CD4-positive, alpha-beta memory T cell (primary cell): ENCODE measurements at regions of chr17 and their contacts with region 1.

Region 1: DNA sequence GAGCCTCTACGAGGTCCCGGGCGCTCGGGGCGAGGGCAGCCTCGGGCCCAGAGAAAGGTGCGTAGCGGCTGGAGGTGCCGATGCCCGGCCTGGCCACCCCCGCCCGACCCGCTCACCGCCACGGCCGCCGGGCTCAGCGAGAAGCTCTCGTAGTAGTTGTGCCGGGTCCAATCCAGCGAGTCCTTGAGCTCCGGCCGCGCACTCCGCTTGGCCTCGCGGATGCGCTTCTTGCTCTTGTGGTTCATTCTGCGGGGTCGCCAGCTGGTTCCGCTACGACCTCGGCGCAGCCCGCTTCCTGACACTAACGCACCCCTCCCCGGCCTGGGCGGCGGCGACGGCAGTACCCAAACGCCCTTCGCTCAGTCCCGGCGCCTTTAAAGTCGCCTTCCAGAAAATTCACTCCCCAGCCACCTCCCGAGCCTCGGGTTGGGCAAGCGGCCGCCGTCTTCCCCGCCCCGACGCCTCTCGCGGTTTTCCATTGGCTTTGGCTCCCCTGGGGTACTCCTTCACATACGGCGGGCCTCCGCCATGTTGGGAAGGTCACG is at the start of gene JMJD6:
- DNase-seq: peak in 1 of 5 donors; percentile 98
- H3K4me3 ChIP-seq: peak within 1 kb of the TSS; percentile 52 to 95
- H3K4me3 Mint-ChIP-seq: peak within 1 kb of the TSS; percentile 94 to 99 (median 97)
- H3K27ac ChIP-seq: peak within 1 kb of the TSS; percentile 97
- H3K27ac Mint-ChIP-seq: peak within 1 kb of the TSS; percentile 98 to 100 (median 99)
- H3K4me1 ChIP-seq: peaks cover 71% of the 10 kb centered on the region
- H3K4me1 Mint-ChIP-seq: peaks cover 24 to 76% (median 51%) of the 10 kb centered on the region in 4 donors
- H3K27me3 ChIP-seq: no peaks in the 10 kb centered on the region
- H3K27me3 Mint-ChIP-seq: no peaks in the 10 kb centered on the region
- total RNA-seq, gene JMJD6: 59.4 to 62.1 TPM

Region 2: DNA sequence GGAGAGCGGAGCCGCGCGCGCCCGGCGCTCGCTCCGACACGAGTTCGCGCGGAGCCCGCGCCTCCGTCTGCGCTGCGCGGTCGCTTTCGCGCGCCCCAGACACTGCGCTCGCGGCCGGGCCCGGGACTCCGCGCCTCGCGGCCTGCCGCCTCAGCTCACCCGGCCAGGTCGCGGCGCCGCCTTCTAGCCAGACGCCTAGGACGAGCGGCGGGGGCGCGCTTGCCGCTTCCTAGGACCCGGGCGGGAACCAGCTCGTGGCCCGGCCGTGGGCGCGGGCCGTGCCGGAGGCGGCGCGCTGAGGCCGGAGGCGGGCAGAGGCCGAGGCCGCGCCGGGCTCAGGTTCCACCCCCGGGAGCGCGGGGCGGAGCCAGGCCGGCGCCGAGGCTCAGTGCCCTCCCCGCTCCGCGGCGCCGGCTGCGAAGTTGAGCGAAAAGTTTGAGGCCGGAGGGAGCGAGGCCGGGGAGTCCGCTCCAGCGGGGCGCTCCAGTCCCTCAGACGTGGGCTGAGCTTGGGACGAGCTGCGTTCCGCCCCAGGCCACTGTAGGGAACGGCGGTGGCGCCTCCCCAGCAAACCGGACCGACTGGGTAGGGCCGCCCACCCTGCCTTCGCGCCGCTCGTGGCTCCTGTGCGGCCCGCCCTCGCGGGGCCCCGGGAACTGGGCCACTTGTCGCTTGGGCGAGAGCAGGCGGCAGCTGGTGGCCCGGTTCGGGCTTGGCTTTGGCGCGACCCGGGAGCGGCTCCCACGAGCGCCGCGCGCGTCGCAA is 341.9 kb before region 1 on chr17 and contains the start of gene SPHK1:
- CTCF ChIA-PET with region 1: no interaction called
- POLR2A ChIA-PET with region 1: no interaction called
- intact Hi-C with region 1: no loop called
- DNase-seq: peak in 4 of 5 donors; percentile 38 to 60 (median 50)
- H3K4me3 ChIP-seq: peak within 1 kb of the TSS; percentile 42 to 64
- H3K4me3 Mint-ChIP-seq: peak within 1 kb of the TSS; percentile 86 to 95 (median 90)
- H3K27ac ChIP-seq: no peak within 1 kb of the TSS
- H3K27ac Mint-ChIP-seq: peak within 1 kb of the TSS; percentile 39 to 92 (median 72)
- H3K4me1 ChIP-seq: peaks cover 20% of the 10 kb centered on the region
- H3K4me1 Mint-ChIP-seq: peaks cover 0 to 6% (median 4%) of the 10 kb centered on the region in 4 donors
- H3K27me3 ChIP-seq: no peaks in the 10 kb centered on the region
- H3K27me3 Mint-ChIP-seq: no peaks in the 10 kb centered on the region
- total RNA-seq, gene SPHK1: 0.67 to 0.70 TPM

Region 3: GRCh38 chr17:76515274-76515949 is 210.9 kb before region 1 on chr17:
- CTCF ChIA-PET with region 1: no interaction called
- POLR2A ChIA-PET with region 1: interaction called, 8 read pairs
- intact Hi-C with region 1: loop called (anchors 5 kb)
- DNase-seq: peak; percentile 91 to 95 (median 94)
- H3K4me3 ChIP-seq: peak overlapping the region; percentile 20 to 25
- H3K4me3 Mint-ChIP-seq: peak overlapping the region; percentile 69 to 86 (median 80)
- H3K27ac ChIP-seq: peak overlapping the region; percentile 76
- H3K27ac Mint-ChIP-seq: peak overlapping the region; percentile 94 to 100 (median 99)
- H3K4me1 ChIP-seq: peaks cover 82% of the 10 kb centered on the region
- H3K4me1 Mint-ChIP-seq: peaks cover 31 to 85% (median 51%) of the 10 kb centered on the region in 4 donors
- H3K27me3 ChIP-seq: no peaks in the 10 kb centered on the region
- H3K27me3 Mint-ChIP-seq: no peaks in the 10 kb centered on the region

Region 4: DNA sequence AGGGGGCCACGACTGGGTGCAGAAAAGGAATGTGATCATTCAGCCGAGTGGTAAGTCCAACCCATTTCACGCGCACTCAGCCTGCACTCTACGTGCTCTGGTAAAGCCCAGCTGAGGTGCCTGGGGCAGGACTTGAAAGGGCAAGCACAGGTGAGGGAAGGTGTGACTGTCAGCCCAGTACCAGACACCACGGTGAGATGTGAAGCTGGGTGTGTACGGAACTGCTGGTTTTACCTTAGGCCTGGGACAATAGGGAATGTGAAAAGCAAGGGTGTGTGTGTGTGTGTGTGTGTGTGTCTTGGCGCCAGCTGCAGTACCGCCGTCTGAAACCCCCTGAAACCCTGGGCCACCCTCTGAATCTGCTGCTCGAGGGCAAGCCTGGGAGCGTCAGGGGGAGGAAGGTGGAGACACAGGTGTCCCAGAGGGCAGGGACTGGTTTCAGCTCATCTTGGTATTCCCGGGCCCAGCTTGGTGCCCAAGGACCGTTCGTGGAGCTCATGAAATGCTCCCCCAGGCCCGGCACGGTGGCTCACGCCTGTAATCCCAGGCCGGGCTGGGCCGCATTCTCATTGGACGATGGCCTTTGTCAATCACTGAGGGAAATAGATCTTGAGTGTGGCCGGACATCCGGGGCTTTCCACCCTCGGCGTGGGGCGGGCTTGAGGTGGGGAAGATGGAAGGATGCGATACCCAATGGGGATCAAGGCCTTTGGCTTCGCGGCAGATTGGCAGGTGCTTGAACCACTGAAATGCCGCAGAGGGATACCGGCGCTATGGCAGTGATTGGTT is 55.0 kb before region 1 on chr17:
- CTCF ChIA-PET with region 1: no interaction called
- POLR2A ChIA-PET with region 1: interaction called, 10 read pairs
- intact Hi-C with region 1: loop called (anchors 5 kb)
- DNase-seq: peak; percentile 98 to 99 (median 99)
- H3K4me3 ChIP-seq: peak overlapping the region; percentile 75 to 83
- H3K4me3 Mint-ChIP-seq: peak overlapping the region; percentile 87 to 97 (median 92)
- H3K27ac ChIP-seq: peak overlapping the region; percentile 72
- H3K27ac Mint-ChIP-seq: peak overlapping the region; percentile 91 to 98 (median 97)
- H3K4me1 ChIP-seq: peaks cover 34% of the 10 kb centered on the region
- H3K4me1 Mint-ChIP-seq: peaks cover 22 to 32% (median 29%) of the 10 kb centered on the region in 4 donors
- H3K27me3 ChIP-seq: no peaks in the 10 kb centered on the region
- H3K27me3 Mint-ChIP-seq: no peaks in the 10 kb centered on the region

Region 5: GRCh38 chr17:76737082-76737675 is 10.9 kb after region 1 on chr17 and contains the start of gene SRSF2:
- CTCF ChIA-PET with region 1: interaction called, 18 read pairs
- POLR2A ChIA-PET with region 1: interaction called, 283 read pairs
- intact Hi-C with region 1: loop called (anchors 1 kb)
- DNase-seq: peak; percentile 99 to 100 (median 100)
- H3K4me3 ChIP-seq: peak within 1 kb of the TSS; percentile 76 to 93
- H3K4me3 Mint-ChIP-seq: peak within 1 kb of the TSS; percentile 92 to 98 (median 96)
- H3K27ac ChIP-seq: peak within 1 kb of the TSS; percentile 95
- H3K27ac Mint-ChIP-seq: peak within 1 kb of the TSS; percentile 98 to 100 (median 99)
- H3K4me1 ChIP-seq: peaks cover 58% of the 10 kb centered on the region
- H3K4me1 Mint-ChIP-seq: peaks cover 38 to 66% (median 49%) of the 10 kb centered on the region in 4 donors
- H3K27me3 ChIP-seq: no peaks in the 10 kb centered on the region
- H3K27me3 Mint-ChIP-seq: no peaks in the 10 kb centered on the region
- total RNA-seq, gene SRSF2: 327 to 330 TPM

Region 6: DNA sequence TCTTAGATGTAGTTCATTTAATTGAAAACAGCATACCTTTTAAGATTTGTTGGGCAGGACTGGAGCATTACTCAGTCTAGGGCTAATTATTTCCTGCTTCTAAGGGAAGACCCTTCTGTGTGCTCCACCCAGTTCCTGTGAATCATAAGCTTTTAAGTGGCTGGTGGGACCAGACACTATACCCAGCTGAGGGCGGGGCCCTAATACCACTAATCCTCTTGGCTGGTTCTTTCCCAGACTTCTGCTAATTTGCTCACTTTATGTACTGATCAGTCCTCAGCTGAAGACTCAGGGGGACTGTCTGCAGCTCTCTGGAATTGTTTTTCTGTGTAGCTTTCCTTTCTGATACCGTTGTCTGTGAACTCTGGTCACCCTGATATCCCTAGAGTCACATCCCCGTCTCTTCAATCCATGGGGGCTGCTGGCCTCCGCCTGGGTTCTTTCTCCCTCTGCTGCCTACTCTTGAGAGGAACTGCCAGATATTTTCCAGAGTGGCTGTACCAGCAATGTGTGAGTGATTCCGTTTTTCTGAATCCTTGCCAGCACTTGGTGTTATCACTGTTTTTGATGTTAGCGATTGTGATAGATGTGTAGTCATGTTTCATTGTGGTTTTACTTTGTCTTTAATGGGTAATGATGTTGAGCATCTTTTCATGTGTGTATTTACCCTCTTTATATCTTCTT is 46.7 kb after region 1 on chr17:
- CTCF ChIA-PET with region 1: interaction called, 5 read pairs
- POLR2A ChIA-PET with region 1: interaction called, 93 read pairs
- intact Hi-C with region 1: loop called (anchors 1 kb)
- DNase-seq: peak; percentile 70 to 90 (median 73)
- H3K4me3 ChIP-seq: peak overlapping the region; percentile 25 to 31
- H3K4me3 Mint-ChIP-seq: peak overlapping the region; percentile 82 to 92 (median 85)
- H3K27ac ChIP-seq: peak overlapping the region; percentile 78
- H3K27ac Mint-ChIP-seq: peak overlapping the region; percentile 96 to 99 (median 98)
- H3K4me1 ChIP-seq: peaks cover 16% of the 10 kb centered on the region
- H3K4me1 Mint-ChIP-seq: peaks cover 19 to 27% (median 24%) of the 10 kb centered on the region in 4 donors
- H3K27me3 ChIP-seq: no peaks in the 10 kb centered on the region
- H3K27me3 Mint-ChIP-seq: no peaks in the 10 kb centered on the region

Region 7: DNA sequence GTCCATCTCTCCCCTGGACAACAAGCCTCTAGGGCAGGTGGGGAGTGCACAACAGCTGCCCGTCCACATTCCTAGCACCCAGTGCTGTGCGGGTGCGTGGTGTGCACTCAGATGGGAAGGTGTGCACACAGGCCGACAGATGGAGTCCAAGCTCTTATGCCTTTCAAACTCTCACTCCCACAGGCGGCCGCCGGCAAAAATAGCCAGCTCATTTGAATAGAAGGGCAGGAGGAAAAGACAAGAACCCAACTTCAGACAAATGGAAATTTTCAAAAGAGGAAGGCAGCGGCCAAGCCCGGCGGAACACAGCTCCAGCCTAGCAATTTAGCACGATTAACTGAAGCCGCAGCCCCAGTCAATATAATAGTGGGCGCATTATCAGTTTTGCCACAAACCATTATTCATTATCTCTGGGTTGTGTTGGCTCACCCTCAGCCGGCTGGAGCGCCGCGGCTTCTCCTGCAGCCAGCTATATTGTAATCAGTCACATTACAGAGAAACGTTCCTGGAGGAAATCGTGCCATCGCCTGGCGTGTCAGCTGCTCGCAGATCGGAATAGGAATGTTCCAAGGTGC is 310.6 kb after region 1 on chr17:
- CTCF ChIA-PET with region 1: no interaction called
- POLR2A ChIA-PET with region 1: no interaction called
- intact Hi-C with region 1: no loop called
- DNase-seq: no peak
- H3K4me3 ChIP-seq: no peak overlapping the region
- H3K4me3 Mint-ChIP-seq: no peak overlapping the region
- H3K27ac ChIP-seq: no peak overlapping the region
- H3K27ac Mint-ChIP-seq: no peak overlapping the region
- H3K4me1 ChIP-seq: no peaks in the 10 kb centered on the region
- H3K4me1 Mint-ChIP-seq: no peaks in the 10 kb centered on the region
- H3K27me3 ChIP-seq: peaks cover 6% of the 10 kb centered on the region
- H3K27me3 Mint-ChIP-seq: peaks cover 4 to 19% of the 10 kb centered on the region in 2 donors